MCF 10A (cell line): ENCODE measurements at regions of chr10 and their contacts with region 1.

Region 1: DNA sequence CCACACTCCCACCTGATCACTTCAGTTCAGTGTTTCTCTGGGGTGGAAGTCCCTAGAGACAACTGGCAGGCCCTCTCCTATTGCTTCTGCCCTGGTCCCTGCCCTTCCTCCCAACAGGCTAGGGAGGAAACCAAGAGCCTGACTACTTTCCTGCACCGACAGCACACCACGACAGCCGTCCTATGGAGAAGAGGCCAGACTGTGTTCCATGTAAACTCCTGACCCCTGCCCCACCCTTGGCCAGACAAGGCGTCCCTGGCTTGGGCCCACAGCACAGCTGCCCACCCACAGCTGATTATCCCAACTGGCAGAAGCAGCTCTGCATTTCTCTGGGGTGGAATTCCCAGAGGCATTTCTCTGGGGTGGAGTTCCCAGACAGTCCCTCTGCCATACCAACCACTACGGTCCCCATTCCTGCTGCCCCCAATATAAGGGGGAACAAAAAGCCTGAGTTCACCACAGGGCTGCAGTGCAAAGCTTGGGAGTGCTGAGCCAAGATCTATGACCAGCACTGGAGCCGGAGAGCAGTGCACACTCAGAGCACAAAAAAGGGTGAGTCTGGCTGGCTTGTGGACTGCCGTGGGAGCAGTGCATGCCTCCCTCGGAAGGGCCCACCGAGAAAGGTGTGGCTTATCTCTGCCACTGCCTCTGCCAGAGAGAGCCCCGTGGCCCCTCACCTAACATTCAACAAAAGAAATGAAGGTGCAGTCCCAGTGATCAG is 193.4 kb downstream of the HPSE2 start:
- DNase-seq: no peak
- H3K4me3 Mint-ChIP-seq: no peak overlapping the region
- H3K27ac Mint-ChIP-seq: no peak overlapping the region
- H3K4me1 Mint-ChIP-seq: no peaks in the 10 kb centered on the region
- H3K27me3 Mint-ChIP-seq: no peaks in the 10 kb centered on the region
- CTCF ChIP-seq: no peak

Region 2: DNA sequence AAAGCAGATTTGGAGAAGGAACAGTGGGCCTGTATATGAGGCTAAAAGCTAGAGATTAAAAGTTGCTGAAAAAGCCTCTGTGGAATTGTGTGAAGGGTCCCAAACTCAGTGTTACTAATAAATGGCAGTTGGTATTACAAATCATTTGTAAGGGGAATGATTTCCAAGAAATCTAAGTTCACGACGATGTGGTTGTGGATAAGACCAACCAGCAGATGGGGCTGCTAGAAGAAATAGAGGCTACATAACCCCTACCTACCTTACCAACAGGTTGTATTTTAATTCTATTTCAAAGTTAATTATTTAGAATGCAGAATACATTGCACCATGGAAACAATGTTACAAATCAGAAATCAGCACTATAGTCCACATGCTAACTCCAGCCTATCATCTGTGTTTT is 183.7 kb before region 1 on chr10:
- CTCF ChIA-PET with region 1: interaction called, 4 read pairs
- POLR2A ChIA-PET with region 1: no interaction called
- intact Hi-C with region 1: loop called (anchors 1 kb)
- DNase-seq: peak; percentile 22
- H3K4me3 Mint-ChIP-seq: no peak overlapping the region
- H3K27ac Mint-ChIP-seq: no peak overlapping the region
- H3K4me1 Mint-ChIP-seq: no peaks in the 10 kb centered on the region
- H3K27me3 Mint-ChIP-seq: peaks cover 14% of the 10 kb centered on the region
- CTCF ChIP-seq: no peak